ENCODE measurements at regions of chr4 and their contacts with region 1.

Region 1: DNA sequence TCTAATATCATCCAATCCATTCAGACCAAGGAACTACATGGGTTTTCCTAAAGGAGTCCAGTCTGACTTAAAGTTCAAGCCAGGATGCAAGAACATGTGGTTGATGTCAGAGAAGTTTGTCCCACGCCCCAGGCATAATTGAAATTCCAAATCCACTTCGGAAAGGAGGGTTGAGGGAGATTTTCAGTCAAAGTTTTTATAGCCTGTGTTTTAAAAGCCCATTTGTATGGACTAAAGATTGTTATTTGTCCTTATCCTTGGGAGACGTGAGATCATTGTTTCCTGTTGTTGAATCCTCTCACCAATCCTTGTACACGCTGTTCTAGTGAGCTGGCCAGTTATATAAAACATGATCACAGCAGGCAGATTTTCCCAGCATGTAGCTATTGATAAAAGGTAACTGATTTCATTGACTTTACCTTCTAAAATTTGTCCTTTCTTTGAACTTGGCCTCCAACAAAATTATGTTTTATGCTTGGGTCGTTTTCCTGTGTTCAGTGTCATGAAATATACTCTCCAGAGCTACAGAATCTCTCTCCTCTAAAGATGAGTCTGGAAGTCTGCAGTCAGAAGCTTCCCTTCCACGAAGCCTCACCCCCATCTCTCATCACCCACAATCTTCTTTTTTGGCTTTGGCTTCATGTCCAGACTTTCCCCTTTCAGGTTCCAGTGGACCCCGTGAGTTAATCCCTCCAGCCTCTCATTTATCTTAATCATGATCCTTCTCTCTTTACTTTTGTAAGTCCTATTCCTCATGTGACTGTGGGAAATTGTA is 92.9 kb downstream of the ATP10D start:
- DNase-seq: peak; percentile 92
- H3K4me3 ChIP-seq: peak overlapping the region in 1 of 3 experiments; percentile 26
- H3K27ac ChIP-seq: peak overlapping the region; percentile 99
- H3K4me1 ChIP-seq: peaks cover 16% of the 10 kb centered on the region
- H3K27me3 ChIP-seq: no peaks in the 10 kb centered on the region
- CTCF ChIP-seq: no peak
- POLR2A ChIP-seq: peak; percentile 40

Region 2: DNA sequence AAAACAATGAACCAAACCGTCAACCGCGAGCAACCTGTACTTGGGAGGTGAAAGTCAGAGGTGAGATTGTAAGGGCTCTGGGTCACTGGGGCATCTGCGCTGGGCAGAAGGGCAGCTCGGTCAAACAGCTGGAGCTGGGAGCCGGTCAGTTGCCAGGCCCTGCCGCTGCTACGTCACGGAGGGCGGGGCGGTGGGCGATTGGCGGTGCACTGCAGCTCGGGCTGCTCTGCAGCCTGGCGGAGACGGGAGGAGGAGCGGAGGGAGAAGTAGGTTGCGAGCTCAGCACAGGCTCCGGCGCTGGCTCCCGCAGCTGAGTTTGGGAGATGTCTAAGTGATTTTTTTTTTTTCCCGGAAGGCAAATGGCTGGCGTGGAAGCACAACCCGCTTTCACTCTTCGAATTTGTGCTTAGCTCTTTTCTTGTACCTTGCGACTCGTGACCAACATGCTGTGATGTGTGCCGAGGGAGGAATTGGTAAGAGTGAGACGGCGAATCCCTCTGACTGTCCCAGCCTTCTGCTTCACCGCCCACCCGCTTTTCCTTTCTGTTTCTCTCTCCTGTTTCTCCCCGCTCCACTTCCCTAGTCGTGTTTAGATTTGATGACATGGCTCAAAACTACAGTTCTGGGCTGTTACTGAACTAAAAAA is 92.8 kb before region 1 on chr4 and contains the start of gene ATP10D:
- CTCF ChIA-PET with region 1: interaction called, 4 read pairs
- POLR2A ChIA-PET with region 1: no interaction called
- dilution Hi-C with region 1: no loop called
- intact Hi-C with region 1: loop called (anchors 5 kb)
- DNase-seq: peak; percentile 95
- H3K4me3 ChIP-seq: peak within 1 kb of the TSS; percentile 75 to 83 (median 79)
- H3K27ac ChIP-seq: peak within 1 kb of the TSS; percentile 77
- H3K4me1 ChIP-seq: peaks cover 2% of the 10 kb centered on the region
- H3K27me3 ChIP-seq: no peaks in the 10 kb centered on the region
- CTCF ChIP-seq: no peak
- POLR2A ChIP-seq: peak; percentile 94
- total RNA-seq, gene ATP10D: 30.9 and 34.1 TPM in 2 replicates

Region 3: GRCh38 chr4:47525154-47525819 is 52.7 kb before region 1 on chr4:
- CTCF ChIA-PET with region 1: no interaction called
- POLR2A ChIA-PET with region 1: no interaction called
- dilution Hi-C with region 1: no loop called
- intact Hi-C with region 1: loop called (anchors 1 kb)
- DNase-seq: peak; percentile 90
- H3K4me3 ChIP-seq: no peak overlapping the region
- H3K27ac ChIP-seq: peak overlapping the region; percentile 99
- H3K4me1 ChIP-seq: peaks cover 25% of the 10 kb centered on the region
- H3K27me3 ChIP-seq: no peaks in the 10 kb centered on the region
- CTCF ChIP-seq: no peak
- POLR2A ChIP-seq: no peak